Activated CD8-positive, alpha-beta T cell treated with anti-CD3 and anti-CD28 coated beads for 36 hours (primary cell): ENCODE measurements at regions of chr1 and their contacts with region 1.

Region 1: GRCh38 chr1:113072757-113073478 is at the start of gene LRIG2:
- DNase-seq: peak; percentile 99
- ATAC-seq: peak; percentile 97
- H3K4me3 Mint-ChIP-seq: peak within 1 kb of the TSS; percentile 85
- H3K27ac Mint-ChIP-seq: peak within 1 kb of the TSS; percentile 94
- H3K4me1 Mint-ChIP-seq: peaks cover 27% of the 10 kb centered on the region
- H3K27me3 Mint-ChIP-seq: no peaks in the 10 kb centered on the region
- CTCF ChIP-seq: peak; percentile 95
- total RNA-seq, gene LRIG2: 7.2 to 8.3 TPM

Region 2: DNA sequence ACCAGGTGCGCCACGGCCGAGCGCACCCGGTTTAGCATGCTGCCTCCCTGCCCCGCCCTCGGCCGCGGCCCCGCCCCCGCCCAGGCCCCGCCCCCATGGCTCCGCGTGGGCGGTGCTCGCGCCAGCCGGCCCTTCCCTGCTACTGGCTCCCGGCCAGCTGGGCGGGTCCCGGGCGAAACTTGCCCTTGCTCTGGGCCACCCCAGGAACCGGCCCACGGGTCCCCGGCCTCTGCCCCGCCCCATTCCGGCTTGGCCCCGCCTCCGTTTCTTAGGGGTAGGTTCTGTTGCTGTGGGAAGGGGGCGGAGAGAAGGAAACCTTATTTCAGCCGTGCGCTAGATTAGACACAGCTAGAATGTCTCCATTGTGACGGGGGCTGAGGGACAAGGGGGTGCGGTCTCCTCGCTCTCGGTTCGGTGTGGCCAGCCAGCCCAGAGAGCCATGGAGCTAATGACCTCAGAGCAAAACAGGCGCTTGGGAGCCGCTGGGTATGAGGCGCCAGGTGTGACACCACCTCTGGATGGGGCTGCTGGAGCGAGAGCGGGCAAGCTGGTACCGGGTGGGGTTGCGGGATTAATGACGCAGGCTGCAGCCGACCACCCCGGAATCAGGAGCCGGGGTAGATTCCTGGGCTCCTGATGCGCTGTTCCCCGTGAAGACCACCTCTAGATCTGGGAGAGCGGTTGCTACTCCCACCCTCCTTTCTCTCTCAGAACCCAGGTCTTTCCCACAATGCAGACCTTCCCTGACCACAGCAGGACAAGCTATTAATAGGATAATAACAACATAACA is 357.5 kb before region 1 on chr1 and contains the start of gene PPM1J:
- CTCF ChIA-PET with region 1: interaction called, 73 read pairs
- POLR2A ChIA-PET with region 1: no interaction called
- intact Hi-C with region 1: loop called (anchors 5 kb)
- DNase-seq: peak; percentile 98
- ATAC-seq: peak; percentile 90
- H3K4me3 Mint-ChIP-seq: peak within 1 kb of the TSS; percentile 76
- H3K27ac Mint-ChIP-seq: no peak within 1 kb of the TSS
- H3K4me1 Mint-ChIP-seq: peaks cover 19% of the 10 kb centered on the region
- H3K27me3 Mint-ChIP-seq: peaks cover 30% of the 10 kb centered on the region
- CTCF ChIP-seq: no peak
- total RNA-seq, gene PPM1J: 1.7 to 2.8 TPM

Region 3: DNA sequence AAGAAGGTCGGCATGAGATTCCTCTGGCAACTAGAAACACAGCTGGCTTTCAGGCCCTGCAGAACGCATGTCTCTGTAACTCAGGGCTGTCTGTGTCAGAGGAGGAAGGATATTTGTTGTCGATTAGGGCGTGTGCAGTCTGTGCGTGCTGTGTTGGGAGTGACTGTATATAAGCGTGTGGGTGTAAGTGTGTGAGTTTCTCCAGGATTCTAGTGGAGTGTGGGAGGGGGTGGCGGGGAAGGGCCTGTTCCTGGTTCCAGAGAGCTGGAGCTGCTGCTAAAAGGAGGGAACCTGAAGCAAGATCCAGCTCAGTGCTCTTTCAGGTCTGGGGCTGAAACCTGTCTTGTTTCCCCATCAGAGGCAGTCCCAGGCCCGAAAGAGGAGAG is 191.2 kb before region 1 on chr1:
- CTCF ChIA-PET with region 1: interaction called, 29 read pairs
- POLR2A ChIA-PET with region 1: no interaction called
- intact Hi-C with region 1: no loop called
- DNase-seq: no peak
- ATAC-seq: no peak
- H3K4me3 Mint-ChIP-seq: no peak overlapping the region
- H3K27ac Mint-ChIP-seq: no peak overlapping the region
- H3K4me1 Mint-ChIP-seq: no peaks in the 10 kb centered on the region
- H3K27me3 Mint-ChIP-seq: no peaks in the 10 kb centered on the region
- CTCF ChIP-seq: no peak

Region 4: GRCh38 chr1:112955781-112956543 is 117.0 kb before region 1 on chr1 and contains the start of gene SLC16A1:
- CTCF ChIA-PET with region 1: interaction called, 10 read pairs
- POLR2A ChIA-PET with region 1: interaction called, 5 read pairs
- intact Hi-C with region 1: no loop called
- DNase-seq: peak; percentile 94
- ATAC-seq: peak; percentile 80
- H3K4me3 Mint-ChIP-seq: peak within 1 kb of the TSS; percentile 91
- H3K27ac Mint-ChIP-seq: peak within 1 kb of the TSS; percentile 100
- H3K4me1 Mint-ChIP-seq: peaks cover 51% of the 10 kb centered on the region
- H3K27me3 Mint-ChIP-seq: no peaks in the 10 kb centered on the region
- CTCF ChIP-seq: no peak
- total RNA-seq, gene SLC16A1: 74.3 to 81.3 TPM

Region 5: GRCh38 chr1:113007706-113008364 is 65.1 kb before region 1 on chr1:
- CTCF ChIA-PET with region 1: no interaction called
- POLR2A ChIA-PET with region 1: no interaction called
- intact Hi-C with region 1: no loop called
- DNase-seq: no peak
- ATAC-seq: no peak
- H3K4me3 Mint-ChIP-seq: no peak overlapping the region
- H3K27ac Mint-ChIP-seq: no peak overlapping the region
- H3K4me1 Mint-ChIP-seq: no peaks in the 10 kb centered on the region
- H3K27me3 Mint-ChIP-seq: no peaks in the 10 kb centered on the region
- CTCF ChIP-seq: no peak

Region 6: DNA sequence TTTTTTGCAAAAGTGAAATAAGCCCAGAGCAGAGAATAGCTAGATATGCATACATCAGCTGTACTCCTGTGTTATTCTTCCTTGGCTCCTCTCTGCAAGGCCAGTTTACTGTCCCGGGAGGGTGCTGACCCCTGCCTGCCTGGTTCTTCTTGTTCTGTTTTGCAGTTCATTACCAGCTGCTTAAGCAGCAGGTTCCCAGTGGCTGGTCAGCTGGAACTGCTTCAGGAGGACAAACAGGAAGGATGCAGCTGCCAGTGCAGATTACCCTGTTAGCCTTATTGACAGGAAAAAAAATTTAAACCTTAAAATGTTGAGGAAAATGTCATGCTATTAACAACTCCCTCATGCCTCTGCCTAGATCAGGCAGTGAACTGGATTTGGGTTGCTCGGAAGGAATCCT is 15.9 kb before region 1 on chr1:
- CTCF ChIA-PET with region 1: interaction called, 44 read pairs
- POLR2A ChIA-PET with region 1: interaction called, 3 read pairs
- intact Hi-C with region 1: no loop called
- DNase-seq: no peak
- ATAC-seq: no peak
- H3K4me3 Mint-ChIP-seq: no peak overlapping the region
- H3K27ac Mint-ChIP-seq: no peak overlapping the region
- H3K4me1 Mint-ChIP-seq: peaks cover 2% of the 10 kb centered on the region
- H3K27me3 Mint-ChIP-seq: no peaks in the 10 kb centered on the region
- CTCF ChIP-seq: no peak

Region 7: GRCh38 chr1:113095790-113096455 is 23.0 kb after region 1 on chr1:
- CTCF ChIA-PET with region 1: interaction called, 12 read pairs
- POLR2A ChIA-PET with region 1: no interaction called
- intact Hi-C with region 1: no loop called
- DNase-seq: no peak
- ATAC-seq: no peak
- H3K4me3 Mint-ChIP-seq: no peak overlapping the region
- H3K27ac Mint-ChIP-seq: no peak overlapping the region
- H3K4me1 Mint-ChIP-seq: peaks cover 8% of the 10 kb centered on the region
- H3K27me3 Mint-ChIP-seq: no peaks in the 10 kb centered on the region
- CTCF ChIP-seq: no peak